ENCODE measurements at regions of chr20 and their contacts with region 1.

Region 1: DNA sequence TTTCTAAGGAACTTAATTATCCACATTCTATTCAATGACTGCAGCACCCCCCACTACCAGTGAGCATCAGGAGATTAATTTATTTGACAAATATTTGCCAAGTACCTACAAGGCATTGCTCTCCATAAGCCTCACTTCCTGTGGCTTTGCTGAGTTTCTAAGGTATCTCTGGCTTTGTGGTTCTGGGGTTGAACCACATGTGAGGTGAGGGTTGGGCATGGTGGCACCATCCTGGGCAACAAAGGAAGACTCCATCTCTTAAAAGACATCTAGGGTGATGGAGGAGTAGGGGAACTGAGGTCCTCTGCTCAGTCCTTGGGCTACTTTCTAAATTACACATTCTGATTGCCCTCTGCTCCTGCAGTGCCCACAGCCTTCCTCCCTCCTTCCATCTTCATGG is 25.5 kb upstream of the WFDC2 start:
- DNase-seq: no peak
- CTCF ChIP-seq: no peak

Region 2: GRCh38 chr20:45358282-45359068 is 85.6 kb before region 1 on chr20:
- in situ Hi-C with region 1: loop called (anchors 5 kb)
- DNase-seq: no peak
- CTCF ChIP-seq: no peak

Measured in GM13977 (cell line).